ENCODE measurements at regions of chr13 and their contacts with region 1.

Region 1: DNA sequence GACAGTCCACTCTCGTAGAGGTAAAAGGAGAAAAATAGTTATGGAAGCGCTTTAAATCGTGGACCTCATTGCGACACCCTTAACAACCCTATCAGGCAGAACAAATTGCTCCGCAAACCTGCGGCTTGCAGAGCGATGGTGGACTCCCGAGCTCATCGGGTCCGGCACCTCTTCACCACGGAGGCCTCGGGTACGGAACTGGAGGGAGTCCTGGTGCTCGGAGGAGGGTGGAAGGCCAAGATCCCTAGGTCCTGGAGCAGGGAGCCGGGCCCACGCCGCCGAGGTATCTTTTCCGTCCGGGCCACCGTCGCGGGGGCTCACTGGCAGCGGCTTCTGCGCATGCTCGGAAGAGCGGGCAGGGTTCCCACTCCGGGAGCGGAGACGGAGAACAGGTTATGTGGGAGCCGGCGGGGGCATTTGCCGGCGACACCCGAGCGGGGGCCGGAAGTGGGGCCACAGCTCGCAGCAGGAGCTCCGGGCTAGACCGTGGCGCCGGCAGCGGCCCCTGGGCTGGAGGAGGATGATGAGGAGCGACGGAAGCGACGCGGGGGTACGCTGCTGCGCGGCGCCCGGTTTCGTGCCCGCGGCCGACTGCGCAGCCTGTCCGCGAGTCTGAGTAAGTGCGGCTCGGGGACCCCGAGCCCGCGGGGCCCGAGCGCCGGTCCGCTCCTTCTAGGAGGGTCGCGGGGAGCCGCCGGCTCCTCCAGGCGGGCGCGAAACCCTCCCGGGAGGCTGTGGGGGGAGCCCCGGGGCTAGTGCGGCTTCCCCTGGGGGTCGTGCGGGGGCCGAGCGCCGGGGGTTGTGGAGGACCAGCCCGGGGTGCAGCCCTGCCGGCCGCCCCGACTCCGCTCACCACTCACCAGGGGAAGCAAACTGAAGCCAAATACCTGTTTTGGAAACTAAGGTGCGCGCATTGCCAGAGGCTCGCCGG is at the start of gene ABHD13:
- DNase-seq: peak; percentile 97
- H3K4me3 Mint-ChIP-seq: peak within 1 kb of the TSS; percentile 93
- H3K27ac Mint-ChIP-seq: peak within 1 kb of the TSS; percentile 95
- H3K4me1 Mint-ChIP-seq: peaks cover 39% of the 10 kb centered on the region
- H3K27me3 Mint-ChIP-seq: peaks cover 3% of the 10 kb centered on the region
- total RNA-seq, gene ABHD13: 7.6 and 8.0 TPM in 2 replicates

Region 2: DNA sequence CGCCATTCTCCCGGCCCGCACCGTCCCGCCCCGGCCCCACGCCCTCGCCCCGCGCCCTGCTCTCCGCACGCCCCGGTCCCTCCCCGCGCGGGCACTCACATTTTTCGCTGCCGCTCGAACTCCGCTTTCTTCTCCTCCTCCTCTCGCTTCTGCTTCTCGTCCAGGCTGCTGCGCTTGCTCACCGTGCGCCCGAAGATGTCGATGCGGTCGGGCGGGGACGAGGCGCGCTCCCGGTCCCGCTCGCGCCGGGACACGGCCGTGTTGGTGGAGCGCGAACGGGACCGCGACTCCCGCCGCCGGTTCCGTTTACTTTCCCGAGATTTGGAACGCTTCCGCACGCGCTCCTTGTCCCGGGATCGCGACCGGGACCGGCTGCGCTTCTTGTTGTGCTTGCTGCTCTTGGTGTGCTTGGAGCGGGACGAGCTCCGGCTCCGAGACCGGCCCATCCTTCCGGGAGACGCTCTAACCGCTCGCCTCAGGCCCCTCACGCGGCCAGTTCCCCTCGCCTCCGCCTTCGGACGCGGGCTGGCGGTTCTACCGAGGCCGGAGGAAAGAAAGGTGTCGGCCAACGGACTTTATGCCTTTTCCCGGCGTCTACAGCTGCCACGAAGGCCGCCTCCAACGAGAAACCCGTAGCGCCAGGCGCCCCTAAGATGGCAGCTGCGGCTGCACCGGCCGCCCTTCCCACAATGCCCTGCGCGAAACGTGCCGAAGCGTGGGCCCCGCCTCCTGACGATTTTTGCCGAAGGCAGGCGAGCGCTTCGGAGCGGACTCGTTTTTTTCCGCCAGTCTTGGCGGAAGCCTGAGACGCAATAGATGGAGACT is 1650.6 kb before region 1 on chr13 and contains the start of gene ARGLU1:
- intact Hi-C with region 1: loop called (anchors 5 kb)
- DNase-seq: peak; percentile 99
- H3K4me3 Mint-ChIP-seq: peak within 1 kb of the TSS; percentile 97
- H3K27ac Mint-ChIP-seq: peak within 1 kb of the TSS; percentile 95
- H3K4me1 Mint-ChIP-seq: peaks cover 46% of the 10 kb centered on the region
- H3K27me3 Mint-ChIP-seq: no peaks in the 10 kb centered on the region
- total RNA-seq, gene ARGLU1: 86.6 and 96.8 TPM in 2 replicates

Region 3: DNA sequence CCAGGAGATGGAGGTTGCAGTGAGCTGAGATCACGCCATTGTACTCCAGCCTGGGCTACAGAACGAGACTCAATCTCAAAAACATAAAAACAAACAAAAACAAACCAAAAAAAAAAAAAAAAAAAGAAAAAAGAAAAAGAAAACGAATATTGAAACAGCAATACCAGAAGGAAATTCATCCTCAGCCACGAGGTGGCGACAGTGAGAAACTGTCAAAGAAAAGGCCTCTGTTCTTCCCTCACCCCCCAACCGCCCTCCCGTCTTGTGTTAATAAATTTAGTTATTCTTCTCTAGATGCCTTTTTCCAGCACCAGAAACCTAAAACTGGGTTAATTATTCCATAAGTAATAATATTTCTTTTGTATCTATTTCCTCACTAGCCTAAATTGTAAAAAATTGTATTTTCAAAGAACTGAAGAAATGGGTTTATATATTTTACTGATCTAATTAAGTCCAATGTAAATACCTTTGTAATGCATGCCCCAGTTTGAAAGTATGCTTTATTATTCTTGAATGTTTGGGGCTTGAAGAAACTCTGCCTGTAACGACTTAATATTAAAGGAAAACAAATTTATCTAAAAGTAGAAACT is 41.5 kb before region 1 on chr13:
- intact Hi-C with region 1: loop called (anchors 5 kb)
- DNase-seq: peak; percentile 84
- H3K4me3 Mint-ChIP-seq: no peak overlapping the region
- H3K27ac Mint-ChIP-seq: no peak overlapping the region
- H3K4me1 Mint-ChIP-seq: no peaks in the 10 kb centered on the region
- H3K27me3 Mint-ChIP-seq: peaks cover 2% of the 10 kb centered on the region

Region 4: GRCh38 chr13:108200781-108201398 is 17.4 kb before region 1 on chr13:
- intact Hi-C with region 1: loop called (anchors 2 kb)
- DNase-seq: no peak
- H3K4me3 Mint-ChIP-seq: no peak overlapping the region
- H3K27ac Mint-ChIP-seq: no peak overlapping the region
- H3K4me1 Mint-ChIP-seq: peaks cover 16% of the 10 kb centered on the region
- H3K27me3 Mint-ChIP-seq: peaks cover 24% of the 10 kb centered on the region

Region 5: GRCh38 chr13:108915634-108916512 is 697.6 kb after region 1 on chr13:
- intact Hi-C with region 1: loop called (anchors 5 kb)
- DNase-seq: peak; percentile 93
- H3K4me3 Mint-ChIP-seq: peak overlapping the region; percentile 77
- H3K27ac Mint-ChIP-seq: peak overlapping the region; percentile 93
- H3K4me1 Mint-ChIP-seq: peaks cover 29% of the 10 kb centered on the region
- H3K27me3 Mint-ChIP-seq: peaks cover 14% of the 10 kb centered on the region